HCT116 (cell line): ENCODE measurements at regions of chr6 and their contacts with region 1.

Region 1: DNA sequence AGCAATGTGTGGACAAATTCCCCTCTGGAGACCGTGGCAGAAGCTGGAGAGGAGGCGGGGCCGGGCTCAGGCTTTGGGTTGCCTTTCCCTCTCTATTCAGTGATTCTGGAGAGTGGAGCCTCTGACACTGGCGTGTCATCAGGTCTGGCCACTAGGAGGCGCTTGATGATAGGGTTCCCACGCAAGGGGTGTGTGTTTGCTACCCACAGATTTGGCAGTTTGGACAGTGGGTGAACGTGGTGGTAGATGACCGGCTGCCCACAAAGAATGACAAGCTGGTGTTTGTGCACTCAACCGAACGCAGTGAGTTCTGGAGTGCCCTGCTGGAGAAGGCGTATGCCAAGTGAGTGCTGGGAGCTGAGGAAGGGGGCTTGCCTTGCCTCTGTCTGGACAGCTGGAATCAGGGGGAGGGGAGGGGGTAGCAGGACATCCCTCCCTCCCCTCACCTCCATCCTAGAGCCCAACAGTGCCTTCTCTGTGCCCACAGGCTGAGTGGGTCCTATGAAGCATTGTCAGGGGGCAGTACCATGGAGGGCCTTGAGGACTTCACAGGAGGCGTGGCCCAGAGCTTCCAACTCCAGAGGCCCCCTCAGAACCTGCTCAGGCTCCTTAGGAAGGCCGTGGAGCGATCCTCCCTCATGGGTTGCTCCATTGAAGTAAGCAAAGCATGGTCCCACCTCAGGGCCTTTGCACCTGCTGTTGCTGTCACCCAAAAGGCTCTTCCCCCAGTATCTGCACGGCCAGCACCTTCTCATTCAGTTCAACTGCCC is 14.3 kb downstream of the CAPN11 start:
- DNase-seq: peak; percentile 59
- ATAC-seq: peak; percentile 96
- H3K4me3 ChIP-seq: no peak overlapping the region
- H3K27ac ChIP-seq: no peak overlapping the region
- H3K4me1 ChIP-seq: peaks cover 3 to 24% of the 10 kb centered on the region in 2 experiments; a peak in 3 of 4 replicates
- H3K27me3 ChIP-seq: no peaks in the 10 kb centered on the region; the same call in 1 of the 2 replicates
- CTCF ChIP-seq: peak; percentile 91 to 94 (median 93)
- POLR2A ChIP-seq: no peak
- RAD21 ChIP-seq: peak; percentile 94

Region 2: GRCh38 chr6:44237813-44238433 is 65.0 kb after region 1 on chr6:
- CTCF ChIA-PET with region 1: interaction called, 8 read pairs
- POLR2A ChIA-PET with region 1: no interaction called
- RAD21 ChIA-PET with region 1: interaction called in 1 of 2 experiments, 3 read pairs
- intact Hi-C with region 1: loop called (anchors 1 kb)
- DNase-seq: no peak
- ATAC-seq: peak; percentile 83
- H3K4me3 ChIP-seq: peak overlapping the region; percentile 45 to 56
- H3K27ac ChIP-seq: peak overlapping the region; percentile 82
- H3K4me1 ChIP-seq: peaks cover 29 to 42% of the 10 kb centered on the region in 2 experiments
- H3K27me3 ChIP-seq: no peaks in the 10 kb centered on the region
- CTCF ChIP-seq: peak in 2 of 3 experiments; percentile 90 to 96; a peak in 4 of 6 replicates
- POLR2A ChIP-seq: no peak
- RAD21 ChIP-seq: no peak

Region 3: DNA sequence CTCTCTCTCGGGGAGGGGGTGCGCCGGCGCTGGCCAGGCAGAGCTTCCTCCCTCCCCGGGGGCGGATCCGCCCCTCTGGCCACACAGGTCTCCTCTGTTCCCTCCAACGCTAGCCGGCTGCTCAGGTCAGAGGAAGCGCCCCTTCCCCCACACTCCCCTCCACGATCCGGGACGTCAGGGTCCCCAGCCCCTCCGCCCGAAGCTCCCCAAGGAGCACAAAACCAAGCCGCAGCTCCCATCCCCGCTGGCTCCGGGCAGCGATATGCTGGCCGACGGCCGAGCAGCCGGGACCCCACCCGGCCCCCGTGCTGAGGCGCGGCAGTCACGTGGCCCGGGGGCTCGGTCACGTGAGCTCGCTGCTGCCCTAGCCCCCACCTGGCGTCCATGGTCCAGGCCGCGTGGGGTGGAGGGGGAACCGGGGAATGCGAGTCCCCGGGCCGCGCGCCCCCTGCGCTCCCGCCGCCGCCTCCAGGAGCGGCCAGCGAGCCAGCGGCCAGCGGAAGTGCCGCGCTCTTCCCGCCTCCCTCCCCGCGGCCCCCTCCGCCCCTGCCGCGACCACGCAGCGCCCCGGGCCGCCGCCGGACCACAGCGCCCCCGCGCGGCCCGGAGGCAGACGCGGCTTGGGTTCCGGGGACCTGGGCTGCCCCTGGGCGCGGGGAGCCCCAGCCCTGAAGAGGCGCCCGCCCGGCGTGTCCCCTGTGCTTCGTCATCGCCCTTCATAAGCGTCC is 84.3 kb after region 1 on chr6 and contains the start of gene SLC35B2:
- CTCF ChIA-PET with region 1: interaction called, 8 read pairs
- POLR2A ChIA-PET with region 1: interaction called, 6 read pairs
- RAD21 ChIA-PET with region 1: interaction called in 1 of 2 experiments, 3 read pairs
- intact Hi-C with region 1: loop called (anchors 2 kb)
- DNase-seq: no peak
- ATAC-seq: peak; percentile 67
- H3K4me3 ChIP-seq: peak within 1 kb of the TSS; percentile 59 to 92
- H3K27ac ChIP-seq: peak within 1 kb of the TSS; percentile 95
- H3K4me1 ChIP-seq: peaks cover 2 to 21% of the 10 kb centered on the region in 2 experiments; a peak in 3 of 4 replicates
- H3K27me3 ChIP-seq: no peaks in the 10 kb centered on the region
- CTCF ChIP-seq: peak; percentile 19 to 60 (median 44); a peak in 4 of 6 replicates
- POLR2A ChIP-seq: peak; percentile 47
- RAD21 ChIP-seq: no peak
- total RNA-seq, gene SLC35B2: 50.5 TPM

Region 4: GRCh38 chr6:44338228-44339122 is 165.6 kb after region 1 on chr6:
- CTCF ChIA-PET with region 1: interaction called, 4 read pairs
- POLR2A ChIA-PET with region 1: no interaction called
- RAD21 ChIA-PET with region 1: no interaction called
- intact Hi-C with region 1: loop called (anchors 5 kb)
- DNase-seq: peak; percentile 54
- ATAC-seq: peak; percentile 97
- H3K4me3 ChIP-seq: no peak overlapping the region
- H3K27ac ChIP-seq: no peak overlapping the region
- H3K4me1 ChIP-seq: no peaks in the 10 kb centered on the region
- H3K27me3 ChIP-seq: no peaks in the 10 kb centered on the region
- CTCF ChIP-seq: peak; percentile 68 to 91 (median 87)
- POLR2A ChIP-seq: no peak
- RAD21 ChIP-seq: peak; percentile 95

Region 5: DNA sequence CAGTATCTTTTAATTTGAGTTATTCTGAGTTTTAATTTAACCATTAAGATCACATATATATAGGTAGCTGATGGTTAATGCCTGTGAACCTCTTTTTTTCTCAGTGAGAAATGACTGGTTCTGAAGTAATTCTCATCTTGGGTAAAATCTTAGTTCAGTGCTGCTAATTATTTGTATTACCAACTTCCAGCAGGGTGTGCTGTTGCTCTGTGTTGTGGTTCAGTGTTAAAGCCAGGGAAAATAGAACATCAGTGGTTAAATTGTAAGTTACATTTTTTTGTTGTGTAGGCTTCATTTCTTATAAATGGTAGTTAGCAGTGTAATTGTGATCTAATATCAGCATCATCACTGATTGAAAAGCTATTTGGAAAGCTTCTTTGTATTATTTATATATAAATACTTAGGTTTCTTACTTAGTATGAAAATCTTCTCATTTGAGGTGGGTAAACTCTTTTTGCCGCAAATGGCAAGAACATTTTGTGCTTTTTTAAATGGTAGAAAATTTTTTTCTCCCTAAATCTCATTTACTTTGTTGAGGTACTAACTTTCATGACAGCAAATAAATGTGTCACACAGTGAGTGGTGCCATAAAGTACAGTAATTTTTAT is 258.3 kb after region 1 on chr6:
- CTCF ChIA-PET with region 1: no interaction called
- POLR2A ChIA-PET with region 1: no interaction called
- RAD21 ChIA-PET with region 1: no interaction called
- intact Hi-C with region 1: no loop called
- DNase-seq: peak; percentile 45
- ATAC-seq: peak; percentile 82
- H3K4me3 ChIP-seq: no peak overlapping the region
- H3K27ac ChIP-seq: no peak overlapping the region
- H3K4me1 ChIP-seq: peaks cover 3% of the 10 kb centered on the region in 2 experiments; a peak in 1 of 4 replicates
- H3K27me3 ChIP-seq: no peaks in the 10 kb centered on the region
- CTCF ChIP-seq: peak; percentile 51 to 78 (median 64); a peak in 5 of 6 replicates
- POLR2A ChIP-seq: no peak
- RAD21 ChIP-seq: peak; percentile 73